Breast epithelium (tissue), 4 donors: ENCODE measurements at regions of chr18 and their contacts with region 1.

Region 1: DNA sequence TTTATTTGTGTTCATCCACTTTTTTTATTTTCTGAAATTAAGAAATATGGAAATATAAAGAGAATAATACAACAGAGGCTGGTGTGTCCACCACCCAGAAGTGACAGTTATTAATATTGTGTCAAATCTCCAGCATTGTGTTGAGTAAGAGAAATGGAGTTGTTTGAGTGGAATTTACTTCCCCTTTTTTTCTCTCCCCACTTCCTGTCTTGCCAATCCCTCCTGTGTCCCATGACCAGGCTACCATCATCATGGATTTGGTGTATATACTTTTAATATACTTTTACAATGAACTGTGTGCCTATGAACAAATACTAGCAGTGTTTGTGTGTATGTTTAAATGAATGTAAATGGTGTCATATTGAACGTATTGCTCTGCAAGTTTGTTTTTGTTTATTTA is 276.9 kb upstream of the SKOR2 start:
- DNase-seq: no peak
- H3K4me3 ChIP-seq: no peak overlapping the region
- H3K27ac ChIP-seq: no peak overlapping the region
- H3K4me1 ChIP-seq: no peaks in the 10 kb centered on the region
- H3K27me3 ChIP-seq: peaks cover 0 to 9% of the 10 kb centered on the region in 2 donors
- CTCF ChIP-seq: no peak
- POLR2A ChIP-seq: no peak

Region 2: DNA sequence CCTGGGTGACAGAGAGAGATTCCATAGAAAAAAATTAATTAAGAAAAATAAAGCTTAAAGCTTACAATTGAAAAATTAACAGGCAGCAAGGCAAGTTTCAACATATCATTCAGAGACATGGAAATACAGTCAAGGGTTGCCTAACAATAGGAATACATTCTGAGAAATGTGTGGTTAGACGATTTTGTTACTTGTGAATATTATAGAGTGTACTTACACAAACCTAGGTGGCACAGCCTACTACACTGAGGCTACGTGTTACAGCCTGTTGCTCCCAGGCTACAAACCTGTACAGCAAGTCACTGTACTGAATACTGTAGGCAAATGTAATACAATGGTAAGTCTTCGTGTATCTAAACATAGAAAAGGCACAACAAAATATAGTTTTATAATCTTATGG is 908.6 kb after region 1 on chr18:
- intact Hi-C with region 1: loop called (anchors 5 kb)
- DNase-seq: no peak
- H3K4me3 ChIP-seq: no peak overlapping the region
- H3K27ac ChIP-seq: no peak overlapping the region
- H3K4me1 ChIP-seq: peaks cover 9 to 11% of the 10 kb centered on the region in 2 donors
- H3K27me3 ChIP-seq: no peaks in the 10 kb centered on the region
- CTCF ChIP-seq: no peak
- POLR2A ChIP-seq: no peak